H1 (cell line): ENCODE measurements at regions of chr3 and their contacts with region 1.

Region 1: DNA sequence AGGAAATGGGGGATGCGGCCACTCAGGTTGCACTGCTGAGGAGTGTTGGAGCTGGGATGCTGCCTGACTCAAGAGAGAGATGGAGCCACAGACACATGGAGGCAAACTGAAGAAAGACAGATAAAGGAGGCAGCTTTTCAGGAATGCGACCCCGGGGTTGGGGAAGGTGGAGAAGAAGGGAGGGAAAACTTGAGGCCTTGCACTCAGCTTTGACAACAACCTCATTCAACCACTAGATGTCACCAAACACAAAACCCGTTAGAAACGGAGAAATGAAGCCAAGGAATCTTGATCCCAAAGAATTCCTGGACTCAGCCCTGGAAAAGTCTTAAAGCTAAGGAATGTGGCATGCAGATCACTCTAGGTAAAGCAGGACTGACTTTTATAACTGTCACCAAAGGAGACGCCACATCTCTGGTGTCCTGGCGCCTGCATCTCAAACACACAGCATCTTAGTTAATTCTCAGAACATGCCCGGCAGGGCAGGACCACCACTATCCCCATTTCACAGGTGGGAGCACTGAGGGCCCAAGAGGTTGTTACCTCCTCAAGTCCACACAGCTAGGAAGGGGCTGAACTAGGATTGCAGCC is 59.6 kb upstream of the LMCD1 start:
- DNase-seq: peak; percentile 39 to 60
- H3K4me3 ChIP-seq: no peak overlapping the region
- H3K27ac ChIP-seq: no peak overlapping the region
- H3K4me1 ChIP-seq: peaks cover 2 to 14% (median 5%) of the 10 kb centered on the region in 4 experiments; a peak in 6 of 7 replicates
- H3K27me3 ChIP-seq: no peaks in the 10 kb centered on the region
- CTCF ChIP-seq: peak; percentile 12 to 85 (median 66)
- EP300 ChIP-seq: no peak
- POLR2A ChIP-seq: no peak
- RAD21 ChIP-seq: peak; percentile 79 to 85

Region 2: GRCh38 chr3:8593026-8593827 is 151.2 kb after region 1 on chr3:
- CTCF ChIA-PET with region 1: interaction called, 11 read pairs
- POLR2A ChIA-PET with region 1: no interaction called
- DNase-seq: peak in 1 of 2 experiments; percentile 44
- H3K4me3 ChIP-seq: no peak overlapping the region
- H3K27ac ChIP-seq: no peak overlapping the region
- H3K4me1 ChIP-seq: no peaks in the 10 kb centered on the region
- H3K27me3 ChIP-seq: no peaks in the 10 kb centered on the region
- CTCF ChIP-seq: no peak
- EP300 ChIP-seq: no peak
- POLR2A ChIP-seq: no peak
- RAD21 ChIP-seq: no peak

Region 3: GRCh38 chr3:8607234-8608040 is 165.4 kb after region 1 on chr3:
- CTCF ChIA-PET with region 1: interaction called, 24 read pairs
- POLR2A ChIA-PET with region 1: no interaction called
- DNase-seq: peak in 1 of 2 experiments; percentile 50
- H3K4me3 ChIP-seq: no peak overlapping the region
- H3K27ac ChIP-seq: no peak overlapping the region
- H3K4me1 ChIP-seq: peaks cover 0 to 2% (median 1%) of the 10 kb centered on the region in 4 experiments; a peak in 2 of 7 replicates
- H3K27me3 ChIP-seq: no peaks in the 10 kb centered on the region; a peak in 1 of 7 replicates
- CTCF ChIP-seq: peak; percentile 64 to 67 (median 65)
- EP300 ChIP-seq: no peak
- POLR2A ChIP-seq: no peak
- RAD21 ChIP-seq: peak; percentile 84 to 88